ENCODE measurements at regions of chr14 and their contacts with region 1.

Region 1: GRCh38 chr14:53539489-53540126 is 386.5 kb upstream of the DDHD1 start:
- DNase-seq: peak; percentile 53
- ATAC-seq: peak; percentile 82
- H3K4me3 ChIP-seq: no peak overlapping the region
- H3K27ac ChIP-seq: no peak overlapping the region
- H3K4me1 ChIP-seq: no peaks in the 10 kb centered on the region
- H3K27me3 ChIP-seq: no peaks in the 10 kb centered on the region
- CTCF ChIP-seq: peak; percentile 78

Region 2: DNA sequence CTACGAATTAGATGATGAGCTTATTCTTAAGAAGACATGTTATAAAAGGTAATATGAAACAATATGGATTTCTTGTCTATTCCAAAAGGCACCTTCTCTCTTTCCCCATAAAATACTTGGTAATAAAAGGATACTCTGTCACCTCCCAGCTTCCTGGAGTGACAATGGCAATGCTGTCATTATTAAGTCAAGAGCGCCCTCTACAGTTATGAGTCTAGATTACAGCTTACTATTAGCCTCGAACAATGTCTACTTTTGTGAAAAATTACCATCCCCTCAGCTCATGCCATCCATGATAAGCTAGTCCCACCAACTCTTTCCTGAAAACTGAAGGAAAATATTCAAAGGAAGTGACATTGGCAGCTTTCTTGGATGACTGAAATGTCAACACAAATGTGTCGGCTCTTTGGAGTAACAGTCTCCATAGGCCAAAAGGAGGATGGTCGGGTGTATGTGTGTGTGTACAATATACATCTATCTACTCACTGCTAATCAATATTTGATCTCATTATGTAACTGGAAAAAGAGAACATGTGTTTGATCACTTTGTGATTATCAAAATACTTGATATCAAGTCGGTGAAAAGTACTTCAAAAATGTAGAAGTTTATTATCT is 808.5 kb after region 1 on chr14:
- CTCF ChIA-PET with region 1: interaction called, 4 read pairs
- POLR2A ChIA-PET with region 1: no interaction called
- in situ Hi-C with region 1: no loop called
- intact Hi-C with region 1: loop called (anchors 5 kb)
- DNase-seq: peak; percentile 24
- ATAC-seq: peak; percentile 78; the same call in 1 of the 2 replicates
- H3K4me3 ChIP-seq: no peak overlapping the region
- H3K27ac ChIP-seq: no peak overlapping the region
- H3K4me1 ChIP-seq: no peaks in the 10 kb centered on the region
- H3K27me3 ChIP-seq: no peaks in the 10 kb centered on the region
- CTCF ChIP-seq: peak; percentile 67

Measured in Panc1 (cell line).